ENCODE measurements at regions of chr19 and their contacts with region 1.

Region 1: GRCh38 chr19:55146078-55146704 is 2.8 kb downstream of the TNNT1 start:
- DNase-seq: no peak
- H3K4me3 ChIP-seq: no peak overlapping the region
- H3K27ac ChIP-seq: no peak overlapping the region
- H3K4me1 ChIP-seq: no peaks in the 10 kb centered on the region
- H3K27me3 ChIP-seq: peaks cover 5% of the 10 kb centered on the region
- CTCF ChIP-seq: no peak

Region 2: DNA sequence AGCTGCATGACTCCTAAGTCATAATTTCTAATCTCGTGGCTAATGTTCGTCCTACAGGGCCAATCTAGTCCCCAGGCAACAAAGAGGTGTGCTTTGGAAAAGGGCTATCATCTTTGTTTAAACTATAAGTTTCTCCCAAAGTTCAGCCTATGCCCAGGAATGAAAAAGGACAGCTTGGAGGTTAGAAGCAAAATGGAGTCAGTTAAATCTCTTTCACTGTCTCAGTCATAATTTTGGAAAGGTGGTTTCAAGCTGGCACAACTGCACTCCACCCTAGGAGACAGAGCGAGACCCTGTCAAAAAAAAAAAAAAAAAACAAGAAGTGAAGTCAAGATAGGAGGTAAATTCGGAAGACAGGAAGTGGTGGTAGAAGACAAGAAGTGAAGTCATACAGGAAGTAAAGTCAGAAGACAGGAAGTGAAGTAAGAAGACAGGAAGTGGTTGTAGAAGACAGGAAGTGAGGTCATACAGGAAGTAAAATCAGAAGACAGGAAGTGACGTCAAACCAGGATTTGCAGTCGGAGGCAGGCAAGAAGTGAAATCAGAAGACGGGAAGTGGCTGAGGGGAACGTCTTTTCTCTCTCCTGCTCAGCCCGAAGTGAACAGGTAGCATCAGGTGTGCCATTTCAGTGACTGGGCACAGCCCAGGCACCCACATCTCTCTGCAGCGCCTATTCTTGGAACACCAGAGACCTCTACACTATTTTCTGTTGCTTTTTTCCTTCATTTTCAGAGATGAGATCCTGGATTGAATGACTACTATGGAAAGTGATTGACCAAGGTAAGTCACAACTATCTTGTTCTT is 140.3 kb before region 1 on chr19:
- intact Hi-C with region 1: no loop called
- DNase-seq: peak in 3 of 5 donors; percentile 35 to 65 (median 61)
- H3K4me3 ChIP-seq: peak overlapping the region in 2 of 3 donors; percentile 35 to 55
- H3K27ac ChIP-seq: no peak overlapping the region
- H3K4me1 ChIP-seq: no peaks in the 10 kb centered on the region
- H3K27me3 ChIP-seq: no peaks in the 10 kb centered on the region
- CTCF ChIP-seq: no peak

Region 3: DNA sequence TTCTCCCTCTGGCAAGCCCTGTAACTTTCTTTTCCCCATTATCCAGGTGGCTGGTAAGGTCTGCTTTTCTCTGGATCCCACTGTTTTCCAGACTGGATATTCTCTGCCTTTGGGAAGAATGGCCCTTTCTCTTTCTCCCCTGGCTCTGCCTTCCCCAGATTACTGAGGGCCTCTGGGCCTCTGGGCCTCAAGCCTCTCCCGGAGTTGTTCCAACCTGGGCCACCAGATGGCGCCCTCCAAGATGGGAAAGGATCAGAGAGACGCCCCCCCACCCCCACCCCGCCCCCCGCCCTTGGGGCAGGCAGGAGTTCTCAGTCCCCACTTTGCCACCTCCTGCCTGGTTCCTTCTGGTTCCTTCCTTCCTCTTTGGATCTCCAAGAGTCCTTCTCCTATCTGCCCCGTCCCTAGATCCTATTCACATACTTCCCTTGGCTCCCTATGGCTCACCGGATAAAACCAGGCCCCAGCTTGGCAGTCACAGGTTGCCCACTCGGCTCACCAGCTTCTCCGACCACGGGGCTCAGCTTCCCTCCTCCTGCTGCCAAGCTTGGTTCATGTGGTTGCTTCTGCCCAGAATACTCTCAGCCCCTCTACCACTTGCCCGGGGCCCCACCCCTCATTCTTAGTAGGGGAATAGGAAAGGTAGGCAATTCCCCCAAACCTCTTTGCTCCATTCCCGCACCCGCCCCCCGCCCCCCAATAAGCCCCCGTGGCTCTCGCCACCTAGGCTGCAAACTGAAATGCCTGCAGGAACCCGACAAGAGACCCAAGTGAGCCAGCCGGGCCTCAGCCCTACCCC is 57.4 kb before region 1 on chr19:
- intact Hi-C with region 1: no loop called
- DNase-seq: peak; percentile 78 to 89 (median 83)
- H3K4me3 ChIP-seq: no peak overlapping the region
- H3K27ac ChIP-seq: no peak overlapping the region
- H3K4me1 ChIP-seq: peaks cover 0 to 15% (median 0%) of the 10 kb centered on the region in 3 donors
- H3K27me3 ChIP-seq: peaks cover 5% of the 10 kb centered on the region
- CTCF ChIP-seq: peak; percentile 66

Region 4: DNA sequence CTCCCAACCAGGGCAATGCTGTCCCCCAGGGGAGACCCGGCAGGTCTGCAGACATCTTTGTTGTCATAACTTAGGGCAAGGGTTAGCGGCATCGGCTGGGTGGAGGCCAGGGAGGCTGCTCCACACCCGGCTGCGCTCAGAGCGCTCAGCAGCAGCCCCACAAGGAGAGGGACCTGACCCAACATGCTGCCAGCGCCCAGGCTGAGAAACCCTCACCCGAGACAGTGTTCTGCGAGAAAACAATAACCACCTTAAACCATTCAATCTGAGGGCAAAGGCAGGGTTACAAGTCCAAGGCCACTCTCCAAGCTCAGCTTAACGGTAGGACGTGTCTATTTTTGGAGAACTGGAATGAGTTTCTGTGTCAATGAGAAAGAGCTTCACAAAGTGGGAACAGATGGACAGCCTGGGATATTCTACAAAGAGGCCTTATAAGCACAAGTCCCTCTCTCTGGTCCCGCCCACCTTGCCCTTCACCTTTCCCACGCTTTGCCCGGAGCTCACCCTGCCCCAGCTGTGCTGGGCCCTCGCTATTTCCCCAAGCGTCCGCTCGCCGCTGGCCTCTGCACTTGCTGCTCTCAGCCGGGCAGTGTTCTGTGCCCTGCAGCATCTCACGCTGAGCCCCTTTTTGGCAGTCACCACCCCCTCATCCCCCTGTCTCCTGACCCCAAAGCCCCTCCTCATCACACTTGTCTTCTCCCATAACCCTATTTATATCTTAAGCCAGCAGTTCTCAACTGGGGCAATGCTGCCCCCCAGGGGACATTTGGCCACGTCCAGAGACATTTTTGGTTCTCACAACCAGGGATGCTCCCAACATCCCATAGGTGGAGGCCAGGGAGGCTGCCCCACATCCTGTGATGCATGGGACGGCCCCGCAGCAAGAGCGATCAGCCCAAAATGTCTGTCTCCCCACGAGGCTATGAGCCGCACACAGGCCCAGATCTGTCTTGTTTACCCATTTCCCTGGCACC is 46.4 kb before region 1 on chr19:
- intact Hi-C with region 1: no loop called
- DNase-seq: no peak
- H3K4me3 ChIP-seq: no peak overlapping the region
- H3K27ac ChIP-seq: no peak overlapping the region
- H3K4me1 ChIP-seq: no peaks in the 10 kb centered on the region
- H3K27me3 ChIP-seq: no peaks in the 10 kb centered on the region
- CTCF ChIP-seq: no peak

Region 5: DNA sequence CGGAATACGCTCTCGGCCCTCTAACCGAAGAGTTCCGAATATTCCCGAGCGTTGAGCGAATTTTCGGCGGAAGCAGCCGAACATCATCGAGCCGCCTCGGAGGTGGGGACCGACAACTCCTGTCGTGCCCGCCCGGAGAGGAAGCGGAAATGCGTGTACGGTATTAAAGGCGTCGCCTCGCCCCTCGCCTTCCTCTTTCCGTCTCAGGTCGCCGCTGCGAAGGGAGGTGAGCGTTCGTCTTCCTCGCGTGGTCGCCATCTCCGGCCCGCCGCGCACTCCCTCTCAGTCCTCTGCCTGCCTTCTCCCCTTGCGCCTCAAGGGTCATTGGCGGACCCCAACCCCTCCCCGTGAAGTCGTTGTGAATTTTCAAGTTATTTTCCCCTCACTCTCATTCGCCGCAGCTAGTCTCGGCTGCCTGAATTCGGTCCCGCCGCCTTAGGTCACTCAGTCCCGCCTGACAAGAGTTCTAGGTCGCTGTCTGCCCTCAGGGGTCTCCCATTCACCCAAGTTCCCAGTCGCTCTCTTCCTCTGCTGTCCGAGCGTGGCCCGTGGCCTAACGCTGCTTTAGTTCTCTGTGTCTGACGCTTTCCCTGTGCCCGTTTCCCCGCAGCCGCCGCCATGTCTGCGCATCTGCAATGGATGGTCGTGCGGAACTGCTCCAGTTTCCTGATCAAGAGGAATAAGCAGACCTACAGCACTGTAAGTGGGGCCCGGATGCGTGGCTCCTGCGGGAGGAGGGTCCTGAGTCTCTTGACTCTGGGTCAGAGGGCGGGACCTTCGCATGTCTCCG is 239.7 kb after region 1 on chr19 and contains the start of gene RPL28:
- intact Hi-C with region 1: no loop called
- DNase-seq: peak; percentile 99 to 100 (median 99)
- H3K4me3 ChIP-seq: peak within 1 kb of the TSS; percentile 96 to 99 (median 97)
- H3K27ac ChIP-seq: peak within 1 kb of the TSS; percentile 95 to 96
- H3K4me1 ChIP-seq: peaks cover 0 to 46% (median 25%) of the 10 kb centered on the region in 3 donors
- H3K27me3 ChIP-seq: no peaks in the 10 kb centered on the region
- CTCF ChIP-seq: no peak
- total RNA-seq, gene RPL28: 1,259 TPM

Region 6: DNA sequence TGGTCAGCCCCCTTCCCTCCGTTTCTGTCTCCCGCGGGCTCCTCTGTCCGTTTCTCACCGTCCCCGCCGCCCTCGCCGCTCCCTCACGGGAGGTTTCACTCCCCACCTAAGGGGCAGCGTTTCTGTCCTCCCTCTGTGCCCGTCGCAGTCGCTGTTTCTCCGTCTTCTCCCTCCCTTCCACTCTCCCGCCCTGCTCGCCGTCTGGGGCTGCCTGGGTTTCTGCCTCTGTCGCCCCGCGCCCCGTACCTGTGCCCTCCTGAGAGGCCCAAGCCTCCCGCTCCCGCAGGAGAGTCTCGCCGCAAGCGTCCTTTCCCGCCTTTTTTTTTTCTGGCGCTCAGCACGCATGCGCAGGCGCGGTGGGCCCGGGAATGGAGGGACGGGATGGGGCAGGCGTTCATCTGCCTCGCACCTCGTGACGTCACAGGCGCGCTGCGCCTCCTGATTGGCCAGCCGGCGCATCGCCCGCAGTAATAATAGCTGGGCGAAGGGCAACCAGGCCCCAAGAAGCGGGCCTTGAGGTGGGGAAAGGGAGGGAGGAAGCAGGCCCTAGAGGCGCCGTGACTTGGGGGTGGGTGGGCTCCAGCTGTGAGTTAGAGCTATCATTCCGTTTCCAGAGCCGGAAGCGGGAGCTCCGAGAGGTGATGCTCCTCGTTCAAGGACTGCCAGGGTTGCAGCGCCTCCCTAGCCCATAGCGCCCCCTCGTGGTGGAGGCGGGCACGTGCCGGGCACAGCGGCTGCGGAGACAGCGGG is 357.5 kb after region 1 on chr19:
- intact Hi-C with region 1: loop called (anchors 10 kb)
- DNase-seq: peak; percentile 93 to 98 (median 96)
- H3K4me3 ChIP-seq: peak overlapping the region; percentile 30 to 70 (median 58)
- H3K27ac ChIP-seq: peak overlapping the region in 1 of 2 donors; percentile 80
- H3K4me1 ChIP-seq: peaks cover 0 to 4% (median 0%) of the 10 kb centered on the region in 3 donors
- H3K27me3 ChIP-seq: no peaks in the 10 kb centered on the region
- CTCF ChIP-seq: peak; percentile 98